MCF 10A (cell line): ENCODE measurements at regions of chr18 and their contacts with region 1.

Region 1: DNA sequence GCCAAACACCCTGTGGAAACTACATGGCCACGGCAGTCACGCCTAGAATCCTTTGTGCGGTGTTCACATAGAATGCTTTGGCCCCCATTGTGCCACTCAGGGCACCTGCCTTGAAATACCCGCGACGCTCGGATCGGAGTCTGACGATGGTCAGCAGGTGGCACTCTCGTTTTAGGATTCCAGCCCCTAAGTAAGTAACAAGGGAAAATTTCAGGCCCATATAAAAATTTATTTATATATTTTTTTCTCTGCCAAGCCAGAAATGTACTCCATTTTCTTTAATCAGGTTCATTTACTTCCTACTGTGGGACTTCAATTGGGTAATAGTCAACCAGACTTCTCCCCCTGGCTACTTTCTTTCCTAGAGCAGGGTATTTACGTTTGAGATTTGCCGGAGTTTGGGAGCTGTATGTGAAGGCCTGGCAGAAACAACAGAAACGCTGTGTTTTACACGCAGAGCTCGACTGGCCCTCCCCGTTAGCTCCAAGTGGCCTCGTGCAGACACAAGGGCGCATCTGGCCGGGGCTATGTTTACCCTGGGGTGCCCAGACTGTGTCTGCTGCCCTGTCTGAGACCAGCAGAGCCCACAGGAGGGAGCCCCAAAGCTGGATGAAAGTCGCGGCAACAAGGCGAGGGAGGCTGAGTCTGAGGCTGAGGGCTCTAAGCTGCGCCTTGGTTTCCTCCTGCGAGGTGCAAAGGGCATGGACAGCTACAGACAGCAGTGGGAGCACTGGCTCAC is 41.6 kb downstream of the LRRC30 start:
- DNase-seq: peak; percentile 83
- H3K4me3 Mint-ChIP-seq: no peak overlapping the region
- H3K27ac Mint-ChIP-seq: peak overlapping the region; percentile 80
- H3K4me1 Mint-ChIP-seq: peaks cover 14% of the 10 kb centered on the region
- H3K27me3 Mint-ChIP-seq: no peaks in the 10 kb centered on the region
- CTCF ChIP-seq: peak; percentile 61

Region 2: GRCh38 chr18:6835345-6835744 is 437.1 kb before region 1 on chr18:
- CTCF ChIA-PET with region 1: no interaction called
- POLR2A ChIA-PET with region 1: no interaction called
- intact Hi-C with region 1: no loop called
- DNase-seq: no peak
- H3K4me3 Mint-ChIP-seq: no peak overlapping the region
- H3K27ac Mint-ChIP-seq: no peak overlapping the region
- H3K4me1 Mint-ChIP-seq: no peaks in the 10 kb centered on the region
- H3K27me3 Mint-ChIP-seq: no peaks in the 10 kb centered on the region
- CTCF ChIP-seq: no peak

Region 3: DNA sequence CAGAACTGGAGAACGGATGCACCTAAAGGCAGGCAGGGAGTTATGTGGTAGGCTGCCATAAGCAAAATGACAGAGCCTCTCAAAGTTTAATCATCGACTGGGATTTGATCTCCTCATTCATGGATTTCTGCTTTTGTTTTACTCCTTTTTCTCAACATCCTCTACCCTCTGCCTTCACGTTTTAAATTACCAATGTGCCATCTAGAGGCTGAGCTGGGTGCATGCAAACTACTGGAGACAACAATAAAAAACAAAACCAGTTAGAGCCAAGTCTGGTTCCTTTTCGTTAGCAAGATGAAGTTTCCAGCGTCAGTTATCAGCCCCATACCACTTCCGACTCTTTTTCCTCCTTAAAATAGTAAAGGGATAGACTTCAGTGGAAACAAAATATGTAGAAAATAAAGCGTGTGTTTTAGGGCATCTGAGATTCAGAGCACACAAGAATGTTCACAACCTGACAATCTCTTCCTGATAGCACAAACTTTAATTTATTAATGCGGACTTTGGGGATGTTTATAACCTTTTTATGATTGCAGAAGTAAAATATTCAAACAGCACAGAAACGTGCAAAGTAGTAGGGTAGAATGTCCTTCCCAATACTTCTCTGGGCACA is 271.9 kb before region 1 on chr18:
- CTCF ChIA-PET with region 1: no interaction called
- POLR2A ChIA-PET with region 1: no interaction called
- intact Hi-C with region 1: no loop called
- DNase-seq: peak; percentile 42
- H3K4me3 Mint-ChIP-seq: no peak overlapping the region
- H3K27ac Mint-ChIP-seq: no peak overlapping the region
- H3K4me1 Mint-ChIP-seq: no peaks in the 10 kb centered on the region
- H3K27me3 Mint-ChIP-seq: no peaks in the 10 kb centered on the region
- CTCF ChIP-seq: peak; percentile 40

Region 4: DNA sequence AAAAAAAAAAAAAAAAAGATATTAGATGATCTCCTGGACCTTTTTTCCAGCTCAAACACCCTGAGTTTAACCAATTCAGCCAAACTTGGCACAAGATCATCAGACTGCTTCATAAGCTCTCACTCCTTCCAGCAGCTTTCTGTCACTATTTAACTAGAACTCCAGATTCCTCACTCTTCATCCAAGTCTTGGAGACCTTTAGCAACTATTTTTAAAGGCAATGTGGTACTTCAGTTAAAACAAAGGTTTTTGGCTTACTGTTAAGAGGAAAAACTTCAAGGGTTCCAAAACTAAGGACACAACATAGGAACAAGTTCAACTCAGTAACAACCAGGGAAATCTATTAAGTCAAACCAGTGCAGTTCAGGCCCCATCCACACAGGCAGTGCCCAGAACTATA is 178.0 kb before region 1 on chr18:
- CTCF ChIA-PET with region 1: no interaction called
- POLR2A ChIA-PET with region 1: no interaction called
- intact Hi-C with region 1: no loop called
- DNase-seq: no peak
- H3K4me3 Mint-ChIP-seq: no peak overlapping the region
- H3K27ac Mint-ChIP-seq: no peak overlapping the region
- H3K4me1 Mint-ChIP-seq: peaks cover 6% of the 10 kb centered on the region
- H3K27me3 Mint-ChIP-seq: no peaks in the 10 kb centered on the region
- CTCF ChIP-seq: no peak

Region 5: GRCh38 chr18:7303316-7304060 is 31.0 kb after region 1 on chr18:
- CTCF ChIA-PET with region 1: interaction called, 26 read pairs
- POLR2A ChIA-PET with region 1: no interaction called
- intact Hi-C with region 1: no loop called
- DNase-seq: no peak
- H3K4me3 Mint-ChIP-seq: no peak overlapping the region
- H3K27ac Mint-ChIP-seq: peak overlapping the region; percentile 4
- H3K4me1 Mint-ChIP-seq: peaks cover 11% of the 10 kb centered on the region
- H3K27me3 Mint-ChIP-seq: no peaks in the 10 kb centered on the region
- CTCF ChIP-seq: no peak

Region 6: GRCh38 chr18:7566567-7567473 is 294.3 kb after region 1 on chr18 and contains the start of gene PTPRM:
- CTCF ChIA-PET with region 1: interaction called, 184 read pairs
- POLR2A ChIA-PET with region 1: interaction called, 108 read pairs
- intact Hi-C with region 1: loop called (anchors 1 kb)
- DNase-seq: peak; percentile 79
- H3K4me3 Mint-ChIP-seq: peak within 1 kb of the TSS; percentile 81
- H3K27ac Mint-ChIP-seq: peak within 1 kb of the TSS; percentile 59
- H3K4me1 Mint-ChIP-seq: peaks cover 35% of the 10 kb centered on the region
- H3K27me3 Mint-ChIP-seq: no peaks in the 10 kb centered on the region
- CTCF ChIP-seq: peak; percentile 45
- total RNA-seq, gene PTPRM: 82.8 and 107 TPM in 2 replicates

Region 7: GRCh38 chr18:7789856-7790552 is 517.5 kb after region 1 on chr18:
- CTCF ChIA-PET with region 1: interaction called, 12 read pairs
- POLR2A ChIA-PET with region 1: no interaction called
- intact Hi-C with region 1: loop called (anchors 5 kb)
- DNase-seq: peak; percentile 68
- H3K4me3 Mint-ChIP-seq: no peak overlapping the region
- H3K27ac Mint-ChIP-seq: no peak overlapping the region
- H3K4me1 Mint-ChIP-seq: peaks cover 12% of the 10 kb centered on the region
- H3K27me3 Mint-ChIP-seq: no peaks in the 10 kb centered on the region
- CTCF ChIP-seq: peak; percentile 41

Region 8: GRCh38 chr18:8389391-8390340 is 1117.2 kb after region 1 on chr18:
- CTCF ChIA-PET with region 1: interaction called, 8 read pairs
- POLR2A ChIA-PET with region 1: interaction called, 4 read pairs
- intact Hi-C with region 1: loop called (anchors 1 kb)
- DNase-seq: peak; percentile 77
- H3K4me3 Mint-ChIP-seq: no peak overlapping the region
- H3K27ac Mint-ChIP-seq: peak overlapping the region; percentile 10
- H3K4me1 Mint-ChIP-seq: no peaks in the 10 kb centered on the region
- H3K27me3 Mint-ChIP-seq: no peaks in the 10 kb centered on the region
- CTCF ChIP-seq: peak; percentile 87